ENCODE measurements at regions of chr6 and their contacts with region 1.

Region 1: DNA sequence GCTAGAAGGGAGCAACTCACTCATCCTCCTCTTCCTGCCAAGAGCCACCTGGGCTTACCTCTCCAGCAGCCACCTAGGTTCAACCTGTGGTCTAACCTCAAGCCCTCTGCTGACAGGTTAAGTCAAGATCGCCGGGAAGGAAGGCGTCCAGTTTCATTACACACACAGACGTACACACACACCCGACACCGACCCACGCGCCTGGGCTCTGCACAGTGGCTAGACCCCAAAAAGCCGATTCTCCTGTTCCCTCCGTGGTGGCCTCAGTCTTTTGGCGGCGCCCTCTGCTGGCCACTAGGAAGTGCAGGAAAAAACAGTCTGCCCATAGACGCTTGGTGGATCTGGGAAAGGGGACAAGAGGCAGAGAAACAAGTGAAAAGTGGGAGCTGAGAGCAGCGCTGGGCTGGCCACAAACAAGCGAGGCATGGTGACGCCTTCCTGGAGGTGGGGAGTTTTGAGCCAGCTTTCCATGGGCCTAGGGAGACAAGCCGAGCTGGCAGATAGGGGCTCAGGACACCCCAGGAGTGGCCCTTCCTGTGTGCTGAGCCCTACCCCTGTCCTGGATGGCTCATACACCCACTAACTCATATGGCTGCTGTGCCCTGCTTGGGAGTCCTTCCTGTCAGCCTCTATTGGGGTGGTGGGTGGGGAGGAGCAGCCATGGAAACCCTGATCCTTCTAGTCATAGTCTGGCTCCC is 52.7 kb downstream of the MRPL14 start:
- DNase-seq: no peak
- H3K4me3 ChIP-seq: no peak overlapping the region
- CTCF ChIP-seq: peak; percentile 92

Region 2: GRCh38 chr6:43667245-43668150 is 407.1 kb before region 1 on chr6:
- CTCF ChIA-PET with region 1: interaction called, 324 read pairs
- POLR2A ChIA-PET with region 1: interaction called, 3 read pairs
- DNase-seq: no peak
- H3K4me3 ChIP-seq: peak overlapping the region; percentile 36
- CTCF ChIP-seq: peak; percentile 99

Region 3: DNA sequence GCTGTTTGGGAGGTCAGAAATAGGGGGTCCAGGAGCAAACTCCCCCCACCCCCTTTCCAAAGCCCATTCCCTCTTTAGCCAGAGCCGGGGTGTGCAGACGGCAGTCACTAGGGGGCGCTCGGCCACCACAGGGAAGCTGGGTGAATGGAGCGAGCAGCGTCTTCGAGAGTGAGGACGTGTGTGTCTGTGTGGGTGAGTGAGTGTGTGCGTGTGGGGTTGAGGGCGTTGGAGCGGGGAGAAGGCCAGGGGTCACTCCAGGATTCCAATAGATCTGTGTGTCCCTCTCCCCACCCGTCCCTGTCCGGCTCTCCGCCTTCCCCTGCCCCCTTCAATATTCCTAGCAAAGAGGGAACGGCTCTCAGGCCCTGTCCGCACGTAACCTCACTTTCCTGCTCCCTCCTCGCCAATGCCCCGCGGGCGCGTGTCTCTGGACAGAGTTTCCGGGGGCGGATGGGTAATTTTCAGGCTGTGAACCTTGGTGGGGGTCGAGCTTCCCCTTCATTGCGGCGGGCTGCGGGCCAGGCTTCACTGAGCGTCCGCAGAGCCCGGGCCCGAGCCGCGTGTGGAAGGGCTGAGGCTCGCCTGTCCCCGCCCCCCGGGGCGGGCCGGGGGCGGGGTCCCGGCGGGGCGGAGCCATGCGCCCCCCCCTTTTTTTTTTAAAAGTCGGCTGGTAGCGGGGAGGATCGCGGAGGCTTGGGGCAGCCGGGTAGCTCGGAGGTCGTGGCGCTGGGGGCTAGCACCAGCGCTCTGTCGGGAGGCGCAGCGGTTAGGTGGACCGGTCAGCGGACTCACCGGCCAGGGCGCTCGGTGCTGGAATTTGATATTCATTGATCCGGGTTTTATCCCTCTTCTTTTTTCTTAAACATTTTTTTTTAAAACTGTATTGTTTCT is 304.8 kb before region 1 on chr6 and contains the start of gene VEGFA:
- CTCF ChIA-PET with region 1: interaction called, 283 read pairs
- POLR2A ChIA-PET with region 1: interaction called, 26 read pairs
- DNase-seq: peak; percentile 77
- H3K4me3 ChIP-seq: peak within 1 kb of the TSS; percentile 98
- CTCF ChIP-seq: peak; percentile 99

Region 4: GRCh38 chr6:43856005-43856765 is 218.4 kb before region 1 on chr6:
- CTCF ChIA-PET with region 1: interaction called, 15 read pairs
- POLR2A ChIA-PET with region 1: no interaction called
- DNase-seq: no peak
- H3K4me3 ChIP-seq: no peak overlapping the region
- CTCF ChIP-seq: peak; percentile 40

Region 5: DNA sequence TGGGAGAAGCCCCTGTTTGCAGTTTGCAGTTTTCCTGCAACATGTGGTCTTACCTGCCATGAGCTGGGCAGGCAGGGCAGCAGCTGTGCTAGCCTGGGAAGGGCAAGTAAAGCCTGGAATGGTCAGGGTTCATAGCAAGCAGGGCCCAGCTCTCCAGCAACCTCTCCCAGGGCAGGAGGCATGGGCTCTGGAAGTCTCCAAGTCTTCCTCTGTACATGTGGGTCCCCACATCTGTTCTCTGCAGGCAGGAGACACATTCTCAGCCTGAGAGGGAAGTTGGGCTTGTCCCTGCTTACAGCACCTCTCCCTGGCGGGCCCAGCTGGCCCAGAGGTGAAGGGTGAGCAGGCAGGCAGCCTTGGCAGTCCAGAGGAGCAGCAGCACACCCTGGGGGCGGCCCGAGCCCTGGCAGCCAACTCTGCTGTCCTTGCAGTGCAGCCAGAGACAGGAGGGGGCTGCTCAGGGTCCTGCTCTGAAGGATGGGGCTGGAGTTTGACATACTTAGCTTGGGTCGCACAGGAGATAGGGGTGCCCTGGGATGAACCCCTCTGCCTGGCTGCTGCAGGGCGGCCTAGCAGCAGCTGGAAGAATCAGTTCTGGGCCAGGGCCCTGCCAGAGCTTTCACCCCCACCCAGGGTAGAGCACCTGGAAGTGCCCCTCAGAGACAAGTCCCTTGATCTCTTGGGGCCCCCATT is 123.4 kb before region 1 on chr6:
- CTCF ChIA-PET with region 1: interaction called, 99 read pairs
- POLR2A ChIA-PET with region 1: no interaction called
- DNase-seq: no peak
- H3K4me3 ChIP-seq: no peak overlapping the region
- CTCF ChIP-seq: peak; percentile 63

Region 6: DNA sequence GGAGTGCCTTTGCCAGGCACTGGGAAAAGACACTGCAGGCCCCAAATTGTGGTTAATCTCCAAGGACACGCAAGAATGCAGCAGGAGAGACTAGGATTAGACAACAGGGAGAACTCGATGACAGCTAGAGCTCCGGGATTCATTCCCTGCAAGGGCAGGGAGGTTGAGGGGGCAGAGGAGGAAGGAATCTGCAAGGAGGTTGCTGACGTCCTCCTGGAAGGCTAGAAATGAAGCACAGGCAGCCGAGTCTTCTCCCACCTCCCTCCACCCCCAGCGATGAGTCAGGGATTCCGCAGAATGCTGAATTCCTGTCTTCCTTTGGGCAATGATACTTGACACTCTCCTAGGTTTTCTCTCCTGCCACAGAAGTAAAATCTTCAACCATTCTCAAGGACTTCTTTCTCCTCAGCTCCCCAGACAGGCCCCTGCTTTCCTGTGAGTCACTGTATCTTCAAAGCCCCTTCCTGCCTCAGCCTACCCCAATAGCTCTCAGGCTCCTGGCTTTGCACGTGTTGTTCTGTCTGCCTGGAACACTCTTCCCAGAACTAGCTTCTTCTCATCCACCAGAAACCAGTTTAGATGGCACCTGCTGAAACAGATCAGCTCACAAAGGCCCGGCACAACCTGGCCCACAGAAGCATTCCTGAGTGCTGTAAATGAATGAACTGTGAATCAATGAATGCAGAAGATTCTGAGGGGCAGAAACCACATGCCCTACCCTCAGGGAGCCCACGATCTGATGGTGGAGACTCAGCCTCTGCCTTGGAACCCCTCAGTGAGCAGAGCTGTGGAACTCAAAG is 32.9 kb before region 1 on chr6:
- CTCF ChIA-PET with region 1: interaction called, 17 read pairs
- POLR2A ChIA-PET with region 1: no interaction called
- DNase-seq: peak; percentile 99
- H3K4me3 ChIP-seq: no peak overlapping the region; the same call in 1 of the 2 replicates
- CTCF ChIP-seq: no peak

Region 7: GRCh38 chr6:44086931-44087574 is 12.5 kb after region 1 on chr6:
- CTCF ChIA-PET with region 1: interaction called, 18 read pairs
- POLR2A ChIA-PET with region 1: no interaction called
- DNase-seq: no peak
- H3K4me3 ChIP-seq: no peak overlapping the region
- CTCF ChIP-seq: no peak

Region 8: GRCh38 chr6:44104481-44105021 is 30.0 kb after region 1 on chr6:
- CTCF ChIA-PET with region 1: no interaction called
- POLR2A ChIA-PET with region 1: no interaction called
- DNase-seq: no peak
- H3K4me3 ChIP-seq: no peak overlapping the region
- CTCF ChIP-seq: no peak

Region 9: GRCh38 chr6:44338228-44339122 is 263.9 kb after region 1 on chr6:
- CTCF ChIA-PET with region 1: no interaction called
- POLR2A ChIA-PET with region 1: no interaction called
- DNase-seq: no peak
- H3K4me3 ChIP-seq: no peak overlapping the region
- CTCF ChIP-seq: peak; percentile 75

Region 10: GRCh38 chr6:44697327-44697726 is 622.7 kb after region 1 on chr6:
- CTCF ChIA-PET with region 1: no interaction called
- POLR2A ChIA-PET with region 1: no interaction called
- DNase-seq: peak; percentile 7
- H3K4me3 ChIP-seq: no peak overlapping the region
- CTCF ChIP-seq: peak; percentile 40